GM12878 (cell line): ENCODE measurements at regions of chr11 and their contacts with region 1.

Region 1: GRCh38 chr11:19432370-19433061 is 191.8 kb upstream of the E2F8 start:
- DNase-seq: peak; percentile 74
- ATAC-seq: peak; percentile 74
- H3K4me3 ChIP-seq: peak overlapping the region; percentile 56
- H3K27ac ChIP-seq: peak overlapping the region; percentile 85
- H3K4me1 ChIP-seq: peaks cover 66% of the 10 kb centered on the region
- H3K27me3 ChIP-seq: no peaks in the 10 kb centered on the region
- CTCF ChIP-seq: no peak
- EP300 ChIP-seq: no peak
- POLR2A ChIP-seq: no peak
- RAD21 ChIP-seq: no peak

Region 2: DNA sequence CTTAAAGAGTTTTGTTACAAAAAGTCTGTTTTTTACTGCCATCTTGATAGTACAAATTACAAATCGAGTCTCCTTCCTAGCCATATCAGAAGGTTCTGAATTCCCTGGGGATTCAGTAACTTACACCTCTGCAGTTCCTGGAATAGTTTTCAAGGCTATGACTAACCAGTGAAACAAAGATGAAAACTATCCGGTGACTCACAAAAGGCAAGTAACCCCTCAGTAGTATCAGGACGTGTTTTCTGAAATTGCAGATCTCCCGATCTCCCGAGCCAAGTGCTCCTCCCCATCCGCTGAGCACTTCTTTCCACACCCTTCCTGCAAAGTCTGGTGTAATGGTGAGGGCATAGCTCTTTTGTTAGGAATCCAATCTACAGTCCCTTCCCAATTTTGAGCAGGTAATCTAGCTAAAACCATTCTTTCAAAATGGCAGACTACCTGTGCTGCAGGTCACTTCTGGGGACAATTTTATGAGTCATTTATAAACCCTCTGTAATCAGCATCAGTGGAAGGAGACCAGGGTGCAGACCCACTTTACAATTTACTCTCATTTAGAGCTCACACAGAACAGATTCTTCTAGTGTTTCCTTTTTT is 199.5 kb before region 1 on chr11:
- CTCF ChIA-PET with region 1: no interaction called
- POLR2A ChIA-PET with region 1: no interaction called
- RAD21 ChIA-PET with region 1: no interaction called
- SMC1A ChIA-PET with region 1: no interaction called
- in situ Hi-C with region 1: no loop called
- intact Hi-C with region 1: no loop called
- DNase-seq: no peak
- ATAC-seq: no peak
- H3K4me3 ChIP-seq: no peak overlapping the region
- H3K27ac ChIP-seq: 0 out of 2 replicates have a peak overlapping the region, but pooled peaks have one; percentile 11
- H3K4me1 ChIP-seq: no peaks in the 10 kb centered on the region
- H3K27me3 ChIP-seq: no peaks in the 10 kb centered on the region
- CTCF ChIP-seq: no peak
- EP300 ChIP-seq: no peak
- POLR2A ChIP-seq: no peak
- RAD21 ChIP-seq: no peak

Region 3: GRCh38 chr11:19332470-19332869 is 100.0 kb before region 1 on chr11:
- CTCF ChIA-PET with region 1: no interaction called
- POLR2A ChIA-PET with region 1: no interaction called
- RAD21 ChIA-PET with region 1: interaction called, 6 read pairs
- SMC1A ChIA-PET with region 1: interaction called, 3 read pairs
- in situ Hi-C with region 1: no loop called
- intact Hi-C with region 1: loop called (anchors 5 kb)
- DNase-seq: peak; percentile 75
- ATAC-seq: peak; percentile 88
- H3K4me3 ChIP-seq: no peak overlapping the region
- H3K27ac ChIP-seq: no peak overlapping the region; the same call in 1 of the 2 replicates
- H3K4me1 ChIP-seq: peaks cover 28% of the 10 kb centered on the region
- H3K27me3 ChIP-seq: no peaks in the 10 kb centered on the region
- CTCF ChIP-seq: no peak
- EP300 ChIP-seq: peak in 1 of 2 experiments; percentile 19; a peak in 1 of 4 replicates
- POLR2A ChIP-seq: no peak
- RAD21 ChIP-seq: no peak

Region 4: DNA sequence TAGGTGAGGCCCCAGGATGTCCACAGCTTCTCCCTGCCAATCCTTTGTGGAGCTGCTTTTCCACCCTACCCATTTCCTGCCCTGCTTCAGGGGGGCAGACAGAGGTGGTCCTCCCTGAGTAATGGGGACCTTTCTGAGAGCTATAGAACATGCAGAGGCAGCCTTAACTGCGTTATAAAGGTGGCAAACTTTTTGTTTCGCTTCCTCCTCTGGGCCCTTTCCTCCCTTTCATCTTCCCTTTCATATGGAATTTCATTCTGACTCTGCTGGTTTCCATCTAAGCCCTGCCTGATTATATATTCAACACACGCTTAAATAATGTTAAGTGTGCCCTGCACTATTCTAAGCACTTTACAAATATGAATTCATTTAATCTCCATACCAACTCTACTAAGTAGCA is 22.5 kb before region 1 on chr11:
- CTCF ChIA-PET with region 1: interaction called, 4 read pairs
- POLR2A ChIA-PET with region 1: interaction called, 7 read pairs
- RAD21 ChIA-PET with region 1: interaction called, 7 read pairs
- SMC1A ChIA-PET with region 1: interaction called, 10 read pairs
- in situ Hi-C with region 1: no loop called
- intact Hi-C with region 1: no loop called
- DNase-seq: peak; percentile 35
- ATAC-seq: peak; percentile 94
- H3K4me3 ChIP-seq: no peak overlapping the region
- H3K27ac ChIP-seq: no peak overlapping the region
- H3K4me1 ChIP-seq: peaks cover 27% of the 10 kb centered on the region
- H3K27me3 ChIP-seq: no peaks in the 10 kb centered on the region
- CTCF ChIP-seq: no peak
- EP300 ChIP-seq: peak in 1 of 2 experiments; percentile 54; a peak in 1 of 4 replicates
- POLR2A ChIP-seq: no peak
- RAD21 ChIP-seq: no peak